ENCODE measurements at regions of chr3 and their contacts with region 1.

Region 1: GRCh38 chr3:169772897-169773828 is at the start of gene MYNN:
- DNase-seq: peak; percentile 91
- ATAC-seq: peak; percentile 77
- H3K4me3 Mint-ChIP-seq: peak within 1 kb of the TSS; percentile 99
- H3K27ac Mint-ChIP-seq: peak within 1 kb of the TSS; percentile 99
- H3K4me1 Mint-ChIP-seq: peaks cover 50% of the 10 kb centered on the region
- H3K27me3 Mint-ChIP-seq: no peaks in the 10 kb centered on the region
- CTCF ChIP-seq: no peak
- total RNA-seq, gene MYNN: 23.9 and 24.8 TPM in 2 replicates

Region 2: DNA sequence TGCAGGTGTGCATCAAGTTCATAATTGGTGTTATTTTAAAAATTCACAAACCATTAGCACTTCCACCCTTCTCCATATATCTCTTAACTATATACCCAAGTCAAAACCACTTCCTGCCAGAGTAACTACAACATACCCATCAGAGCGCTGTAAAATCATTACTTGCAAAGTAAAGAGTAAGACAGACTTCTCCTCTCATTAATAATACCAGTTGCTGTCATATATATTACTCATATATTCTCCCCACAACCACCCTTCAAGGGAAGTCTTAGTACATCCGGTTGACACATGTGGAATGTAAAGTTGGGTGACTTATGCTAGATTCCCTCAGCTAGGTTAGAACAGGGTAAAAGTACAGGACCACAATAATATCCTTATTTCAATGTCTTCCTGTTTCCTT is 13.9 kb before region 1 on chr3:
- CTCF ChIA-PET with region 1: interaction called, 17 read pairs
- POLR2A ChIA-PET with region 1: interaction called, 86 read pairs
- intact Hi-C with region 1: no loop called
- DNase-seq: no peak
- ATAC-seq: no peak
- H3K4me3 Mint-ChIP-seq: no peak overlapping the region
- H3K27ac Mint-ChIP-seq: no peak overlapping the region
- H3K4me1 Mint-ChIP-seq: peaks cover 18% of the 10 kb centered on the region
- H3K27me3 Mint-ChIP-seq: no peaks in the 10 kb centered on the region
- CTCF ChIP-seq: no peak

Region 3: DNA sequence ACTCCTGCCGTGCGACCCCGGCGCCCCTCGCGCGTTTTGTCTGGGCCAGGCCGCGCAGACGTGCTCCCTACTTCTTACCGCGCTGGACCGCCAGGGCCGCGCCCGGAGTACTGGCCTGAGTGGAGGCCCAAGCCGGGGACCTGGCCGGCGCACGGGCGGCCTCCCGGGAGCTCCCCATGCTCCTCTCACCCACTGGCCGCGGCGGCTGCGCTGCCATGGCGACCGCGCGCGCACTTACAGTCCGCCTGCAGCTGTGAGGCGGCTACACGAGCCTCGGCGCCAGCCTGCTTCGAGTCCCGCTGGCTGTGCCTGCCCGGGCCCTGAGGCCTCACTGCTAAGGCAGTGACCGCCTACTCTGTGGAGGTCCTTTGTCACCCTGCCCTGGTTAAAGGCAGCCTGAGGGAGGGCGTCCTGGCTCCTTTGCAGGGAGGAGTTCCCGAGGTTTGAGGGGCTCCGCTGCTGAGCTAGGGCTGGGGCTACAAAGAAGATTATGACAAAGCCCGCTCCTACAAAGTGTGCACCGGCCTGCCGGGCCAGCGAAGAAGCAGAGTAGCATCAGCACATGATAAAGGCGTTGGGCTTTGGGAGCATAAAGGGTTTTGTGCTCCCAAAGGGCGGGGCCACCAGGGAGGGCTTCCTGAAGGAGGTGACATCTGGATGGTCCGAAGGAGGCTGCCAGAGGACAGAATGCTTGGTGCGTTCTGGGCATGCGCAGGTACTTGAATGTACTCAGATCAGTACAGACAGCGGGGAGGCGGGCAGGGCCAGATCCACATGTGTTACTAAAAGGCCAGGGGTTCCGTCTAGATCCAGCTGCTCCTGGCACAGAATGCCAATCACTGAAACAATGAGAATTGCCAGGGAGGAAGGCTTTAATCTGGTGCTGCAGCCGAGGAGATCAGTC is 39.4 kb after region 1 on chr3 and contains the starts of genes LRRC34 and LRRIQ4:
- CTCF ChIA-PET with region 1: interaction called, 3 read pairs
- POLR2A ChIA-PET with region 1: interaction called, 48 read pairs
- intact Hi-C with region 1: loop called (anchors 1 kb)
- DNase-seq: peak; percentile 70
- ATAC-seq: peak; percentile 56
- H3K4me3 Mint-ChIP-seq: peak within 1 kb of the TSS; percentile 85
- H3K27ac Mint-ChIP-seq: peak within 1 kb of the TSS; percentile 97
- H3K4me1 Mint-ChIP-seq: peaks cover 37% of the 10 kb centered on the region
- H3K27me3 Mint-ChIP-seq: no peaks in the 10 kb centered on the region
- CTCF ChIP-seq: no peak
- total RNA-seq, gene LRRC34: 4.2 and 5.7 TPM in 2 replicates
- total RNA-seq, gene LRRIQ4: 0.29 and 0.40 TPM in 2 replicates

Region 4: GRCh38 chr3:169846458-169847193 is 73.5 kb after region 1 on chr3:
- CTCF ChIA-PET with region 1: interaction called, 5 read pairs
- POLR2A ChIA-PET with region 1: interaction called, 28 read pairs
- intact Hi-C with region 1: loop called (anchors 1 kb)
- DNase-seq: no peak
- ATAC-seq: peak; percentile 95
- H3K4me3 Mint-ChIP-seq: peak overlapping the region; percentile 67
- H3K27ac Mint-ChIP-seq: peak overlapping the region; percentile 92
- H3K4me1 Mint-ChIP-seq: peaks cover 57% of the 10 kb centered on the region
- H3K27me3 Mint-ChIP-seq: no peaks in the 10 kb centered on the region
- CTCF ChIP-seq: no peak

Region 5: GRCh38 chr3:169945313-169945712 is 172.2 kb after region 1 on chr3:
- CTCF ChIA-PET with region 1: no interaction called
- POLR2A ChIA-PET with region 1: interaction called, 11 read pairs
- intact Hi-C with region 1: no loop called
- DNase-seq: peak; percentile 54
- ATAC-seq: peak; percentile 91
- H3K4me3 Mint-ChIP-seq: peak overlapping the region; percentile 68
- H3K27ac Mint-ChIP-seq: peak overlapping the region; percentile 93
- H3K4me1 Mint-ChIP-seq: peaks cover 93% of the 10 kb centered on the region
- H3K27me3 Mint-ChIP-seq: no peaks in the 10 kb centered on the region
- CTCF ChIP-seq: no peak

Region 6: GRCh38 chr3:169980055-169980454 is 206.9 kb after region 1 on chr3:
- CTCF ChIA-PET with region 1: no interaction called
- POLR2A ChIA-PET with region 1: interaction called, 13 read pairs
- intact Hi-C with region 1: no loop called
- DNase-seq: no peak
- ATAC-seq: no peak
- H3K4me3 Mint-ChIP-seq: no peak overlapping the region
- H3K27ac Mint-ChIP-seq: peak overlapping the region; percentile 10
- H3K4me1 Mint-ChIP-seq: peaks cover 51% of the 10 kb centered on the region
- H3K27me3 Mint-ChIP-seq: no peaks in the 10 kb centered on the region
- CTCF ChIP-seq: no peak

Region 7: GRCh38 chr3:170180908-170181879 is 408.0 kb after region 1 on chr3 and contains the start of gene PHC3:
- CTCF ChIA-PET with region 1: no interaction called
- POLR2A ChIA-PET with region 1: interaction called, 18 read pairs
- intact Hi-C with region 1: loop called (anchors 1 kb)
- DNase-seq: peak; percentile 92
- ATAC-seq: peak; percentile 80
- H3K4me3 Mint-ChIP-seq: peak within 1 kb of the TSS; percentile 96
- H3K27ac Mint-ChIP-seq: peak within 1 kb of the TSS; percentile 98
- H3K4me1 Mint-ChIP-seq: peaks cover 32% of the 10 kb centered on the region
- H3K27me3 Mint-ChIP-seq: no peaks in the 10 kb centered on the region
- CTCF ChIP-seq: no peak
- total RNA-seq, gene PHC3: 105 TPM in 2 replicates

Measured in activated B cell treated with CpG ODN at 0.5 μM for 24 hours (primary cell).